ENCODE measurements at regions of chr7 and their contacts with region 1.

Region 1: GRCh38 chr7:105325216-105325904 is 63.4 kb downstream of the SRPK2 start:
- DNase-seq: no peak
- ATAC-seq: peak; percentile 84
- H3K4me3 Mint-ChIP-seq: no peak overlapping the region
- H3K27ac Mint-ChIP-seq: peak overlapping the region; percentile 80
- H3K4me1 Mint-ChIP-seq: peaks cover 58% of the 10 kb centered on the region
- H3K27me3 Mint-ChIP-seq: no peaks in the 10 kb centered on the region
- CTCF ChIP-seq: no peak

Region 2: DNA sequence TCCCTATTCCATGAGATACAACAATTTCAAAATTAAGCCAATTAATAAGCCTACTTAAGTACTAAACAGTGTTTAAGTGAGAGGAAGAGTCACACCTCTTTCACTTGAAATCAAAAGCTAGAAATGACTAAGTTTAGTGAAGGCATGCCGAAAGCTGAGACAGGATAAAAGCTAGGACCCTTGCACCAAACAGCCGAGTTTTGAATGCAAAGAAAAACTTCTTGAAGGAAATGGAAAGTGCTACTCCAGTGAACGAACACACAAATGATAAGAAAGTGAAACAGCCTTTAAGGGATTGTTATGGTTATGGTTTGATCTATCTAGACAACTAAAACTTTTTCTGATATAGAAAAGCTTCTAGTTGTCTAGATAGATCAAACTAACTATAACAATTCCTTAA is 446.8 kb before region 1 on chr7:
- CTCF ChIA-PET with region 1: no interaction called
- POLR2A ChIA-PET with region 1: no interaction called
- intact Hi-C with region 1: no loop called
- DNase-seq: no peak
- ATAC-seq: no peak
- H3K4me3 Mint-ChIP-seq: no peak overlapping the region
- H3K27ac Mint-ChIP-seq: no peak overlapping the region
- H3K4me1 Mint-ChIP-seq: peaks cover 2% of the 10 kb centered on the region
- H3K27me3 Mint-ChIP-seq: peaks cover 2% of the 10 kb centered on the region
- CTCF ChIP-seq: no peak

Region 3: DNA sequence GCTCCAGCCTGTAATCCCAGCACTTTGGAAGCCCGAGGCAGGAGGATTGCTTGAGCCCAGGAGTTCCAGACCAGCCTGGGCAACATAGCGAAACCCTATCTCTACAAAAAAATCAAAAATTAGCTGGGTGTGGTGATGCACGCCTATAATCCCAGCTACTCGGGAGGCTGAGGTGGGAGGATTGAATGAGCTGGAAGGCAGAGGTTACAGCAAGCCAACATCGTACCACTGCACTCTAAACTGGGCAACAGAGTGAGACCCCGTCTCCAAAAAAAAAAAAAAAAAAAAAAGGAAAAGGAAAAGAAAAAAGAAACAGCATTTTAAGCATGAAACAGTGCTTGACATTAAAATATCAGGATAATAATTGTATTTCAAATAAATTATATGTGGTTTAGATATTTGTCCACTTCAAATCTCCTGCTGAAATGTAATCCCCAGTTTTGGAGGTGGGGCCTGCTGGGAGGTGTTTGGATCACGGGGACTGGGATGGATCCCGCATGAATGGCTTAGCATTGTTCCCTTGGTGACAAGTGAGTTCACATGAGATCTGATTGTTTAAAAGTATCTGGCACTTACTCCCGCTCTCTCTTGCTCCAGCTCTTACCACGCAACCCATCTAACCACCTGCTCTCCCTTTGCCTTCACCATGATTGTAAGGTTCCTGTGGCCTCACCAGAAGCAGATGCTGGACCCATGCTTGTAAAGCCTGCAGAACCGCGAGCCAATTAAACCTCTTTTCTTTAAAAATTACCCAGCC is 40.1 kb before region 1 on chr7:
- CTCF ChIA-PET with region 1: no interaction called
- POLR2A ChIA-PET with region 1: interaction called, 5 read pairs
- intact Hi-C with region 1: loop called (anchors 5 kb)
- DNase-seq: no peak
- ATAC-seq: no peak
- H3K4me3 Mint-ChIP-seq: no peak overlapping the region
- H3K27ac Mint-ChIP-seq: no peak overlapping the region
- H3K4me1 Mint-ChIP-seq: peaks cover 25% of the 10 kb centered on the region
- H3K27me3 Mint-ChIP-seq: no peaks in the 10 kb centered on the region
- CTCF ChIP-seq: no peak

Region 4: GRCh38 chr7:105309235-105310169 is 15.9 kb before region 1 on chr7:
- CTCF ChIA-PET with region 1: no interaction called
- POLR2A ChIA-PET with region 1: no interaction called
- intact Hi-C with region 1: loop called (anchors 2 kb)
- DNase-seq: no peak
- ATAC-seq: peak; percentile 28
- H3K4me3 Mint-ChIP-seq: no peak overlapping the region
- H3K27ac Mint-ChIP-seq: no peak overlapping the region
- H3K4me1 Mint-ChIP-seq: peaks cover 57% of the 10 kb centered on the region
- H3K27me3 Mint-ChIP-seq: no peaks in the 10 kb centered on the region
- CTCF ChIP-seq: no peak

Measured in activated B cell treated with CpG ODN at 0.5 μM for 24 hours (primary cell).